Cardiac septum (tissue), 1 donor: ENCODE measurements at regions of chr3 and their contacts with region 1.

Region 1: DNA sequence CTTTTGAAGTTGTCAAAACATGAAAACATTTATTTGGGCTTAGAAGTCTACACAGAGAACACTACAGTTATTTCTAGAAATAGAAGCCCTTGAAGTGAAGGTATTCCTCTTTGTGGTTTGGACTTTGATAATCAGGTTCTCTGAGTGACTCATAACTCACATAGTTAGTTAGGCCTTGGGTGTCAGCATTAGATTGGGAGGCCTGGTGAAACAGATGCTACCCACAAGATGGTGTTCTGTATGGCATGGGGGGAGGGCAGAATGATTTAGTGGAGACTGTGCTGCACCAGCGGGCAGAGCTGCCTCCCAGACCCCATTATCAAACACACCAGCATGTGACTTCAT is 108.9 kb upstream of the ETV5 start:
- DNase-seq: no peak

Region 2: DNA sequence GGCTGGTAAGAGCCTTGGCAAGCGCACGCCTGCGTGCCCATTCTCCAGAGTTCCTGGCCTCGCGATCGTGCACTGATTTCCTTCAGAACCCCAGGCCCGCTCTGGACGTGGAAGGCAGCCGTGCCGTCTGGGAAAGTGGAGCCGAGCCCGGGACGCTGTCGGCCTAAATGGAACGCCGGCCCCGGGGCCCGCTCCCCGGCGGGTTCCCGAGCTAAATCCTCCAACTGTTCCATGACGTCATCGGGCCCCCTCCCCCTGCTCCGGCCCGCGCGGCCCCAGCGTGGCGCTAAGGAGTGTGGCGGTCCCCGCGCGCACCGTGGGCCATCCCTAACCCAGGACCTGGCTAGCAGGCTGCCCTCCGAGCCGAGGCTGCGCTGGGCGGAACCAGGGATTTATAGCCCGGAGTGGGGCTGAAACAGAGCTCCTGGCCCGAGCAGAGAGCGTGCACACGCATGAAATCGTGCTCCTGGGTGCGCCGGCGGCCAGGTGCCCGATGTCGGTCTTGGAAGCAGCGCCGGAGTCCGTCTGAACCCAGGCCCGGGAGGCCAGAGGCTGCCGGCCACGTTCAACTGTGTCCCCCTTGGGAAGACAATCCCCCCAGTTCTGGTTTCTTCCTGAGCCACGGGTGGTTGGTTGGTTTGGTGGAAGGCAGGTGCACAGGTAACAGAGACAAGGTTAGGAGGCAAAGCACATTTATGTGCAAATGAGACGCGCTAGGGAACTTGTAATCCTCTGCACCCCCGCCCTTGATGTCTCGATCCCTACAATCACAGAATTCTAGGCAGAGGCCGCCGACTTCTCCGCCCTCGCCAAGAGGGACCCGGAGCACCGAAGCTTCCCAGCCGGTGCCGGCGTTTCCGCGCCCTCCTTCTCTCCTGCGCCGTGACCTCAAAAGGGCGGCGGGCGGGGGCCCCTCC is 24.0 kb before region 1 on chr3:
- intact Hi-C with region 1: loop called (anchors 1 kb)
- DNase-seq: no peak

Region 3: GRCh38 chr3:186236357-186237020 is 18.7 kb after region 1 on chr3:
- intact Hi-C with region 1: loop called (anchors 2 kb)
- DNase-seq: no peak